Activated CD4-positive, alpha-beta T cell treated with anti-CD3 and anti-CD28 coated beads, Interleukin-2, amount 10 ng/mL, durations not matched to agents 7 days and 5 days (primary cell): ENCODE measurements at regions of chr19 and their contacts with region 1.

Region 1: DNA sequence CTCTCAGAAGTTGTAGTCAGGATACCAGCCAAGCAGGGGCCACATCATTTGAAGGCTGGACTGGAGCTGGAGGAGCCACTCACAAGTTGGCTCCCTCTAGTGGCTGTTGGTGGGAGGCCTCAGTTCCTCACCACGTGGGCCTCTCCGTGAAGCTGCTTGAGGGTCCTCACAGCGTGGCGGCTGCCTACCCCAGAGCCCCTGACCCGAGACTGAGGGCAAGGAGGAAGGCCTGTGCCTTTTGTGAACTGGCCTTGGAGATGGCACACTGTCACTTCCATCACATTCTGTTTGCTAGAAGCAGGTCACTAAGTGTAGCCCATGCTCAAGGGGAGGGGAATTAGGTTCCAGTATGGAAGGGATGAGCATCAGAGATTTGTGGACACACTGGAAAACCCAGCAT is 14.6 kb downstream of the GNA11 start:
- DNase-seq: peak; percentile 77
- H3K4me3 Mint-ChIP-seq: no peak overlapping the region
- H3K27ac Mint-ChIP-seq: no peak overlapping the region
- H3K4me1 Mint-ChIP-seq: peaks cover 9% of the 10 kb centered on the region
- H3K27me3 Mint-ChIP-seq: no peaks in the 10 kb centered on the region

Region 2: DNA sequence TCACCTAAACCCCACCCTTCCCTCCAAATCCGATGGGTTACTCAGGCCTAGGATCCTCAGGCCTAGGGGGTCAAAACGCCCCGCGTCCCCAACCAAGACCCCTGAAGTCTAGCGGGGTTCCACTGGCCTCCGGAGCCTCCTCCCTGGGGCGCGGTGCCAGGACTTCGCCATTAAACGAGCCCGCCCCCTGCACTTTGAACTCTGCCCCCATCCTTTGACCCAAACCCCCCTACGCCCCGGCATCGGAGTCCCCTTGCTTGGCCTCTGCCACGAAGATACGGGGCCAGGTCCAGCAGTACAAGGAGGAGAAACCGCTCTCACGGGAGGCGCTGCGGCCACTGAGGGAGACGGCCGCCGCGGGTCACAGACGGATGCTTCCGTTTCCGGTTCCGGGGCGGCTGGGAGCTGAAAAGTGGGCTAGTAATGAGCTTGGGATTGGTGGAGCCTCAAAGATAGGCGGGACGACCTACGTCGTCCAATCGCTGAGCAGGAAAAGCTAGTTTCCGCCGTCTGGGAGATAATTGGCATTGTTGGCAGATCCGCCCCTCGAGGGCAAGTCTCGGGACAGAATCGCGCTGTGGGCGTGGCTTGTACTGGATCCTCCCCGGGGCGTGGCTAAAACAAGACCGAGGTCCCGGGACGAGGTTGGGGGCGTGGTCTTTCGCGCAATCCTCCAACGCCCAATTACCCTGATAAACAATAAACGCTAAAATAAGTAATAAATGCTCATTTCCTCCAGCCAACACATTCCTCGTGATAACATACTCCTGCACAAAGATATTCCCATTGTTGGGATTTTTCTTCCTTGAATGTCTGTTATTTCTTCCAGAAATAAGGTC is 158.3 kb before region 1 on chr19:
- CTCF ChIA-PET with region 1: interaction called, 29 read pairs
- POLR2A ChIA-PET with region 1: no interaction called
- DNase-seq: peak; percentile 100
- H3K4me3 Mint-ChIP-seq: peak overlapping the region; percentile 94
- H3K27ac Mint-ChIP-seq: peak overlapping the region; percentile 97
- H3K4me1 Mint-ChIP-seq: peaks cover 27% of the 10 kb centered on the region
- H3K27me3 Mint-ChIP-seq: no peaks in the 10 kb centered on the region

Region 3: GRCh38 chr19:2962045-2962561 is 146.7 kb before region 1 on chr19:
- CTCF ChIA-PET with region 1: interaction called, 18 read pairs
- POLR2A ChIA-PET with region 1: no interaction called
- DNase-seq: peak; percentile 78
- H3K4me3 Mint-ChIP-seq: peak overlapping the region; percentile 56
- H3K27ac Mint-ChIP-seq: peak overlapping the region; percentile 78
- H3K4me1 Mint-ChIP-seq: peaks cover 5% of the 10 kb centered on the region
- H3K27me3 Mint-ChIP-seq: no peaks in the 10 kb centered on the region

Region 4: GRCh38 chr19:3080301-3081026 is 28.3 kb before region 1 on chr19:
- CTCF ChIA-PET with region 1: interaction called, 14 read pairs
- POLR2A ChIA-PET with region 1: no interaction called
- DNase-seq: no peak
- H3K4me3 Mint-ChIP-seq: no peak overlapping the region
- H3K27ac Mint-ChIP-seq: no peak overlapping the region
- H3K4me1 Mint-ChIP-seq: peaks cover 5% of the 10 kb centered on the region
- H3K27me3 Mint-ChIP-seq: no peaks in the 10 kb centered on the region

Region 5: GRCh38 chr19:3094601-3095437 is 14.0 kb before region 1 on chr19:
- CTCF ChIA-PET with region 1: interaction called, 11 read pairs
- POLR2A ChIA-PET with region 1: no interaction called
- DNase-seq: no peak
- H3K4me3 Mint-ChIP-seq: peak overlapping the region; percentile 52
- H3K27ac Mint-ChIP-seq: peak overlapping the region; percentile 41
- H3K4me1 Mint-ChIP-seq: peaks cover 20% of the 10 kb centered on the region
- H3K27me3 Mint-ChIP-seq: peaks cover 35% of the 10 kb centered on the region

Region 6: GRCh38 chr19:3125900-3126524 is 17.2 kb after region 1 on chr19:
- CTCF ChIA-PET with region 1: interaction called, 11 read pairs
- POLR2A ChIA-PET with region 1: no interaction called
- DNase-seq: peak; percentile 87
- H3K4me3 Mint-ChIP-seq: no peak overlapping the region
- H3K27ac Mint-ChIP-seq: no peak overlapping the region
- H3K4me1 Mint-ChIP-seq: peaks cover 18% of the 10 kb centered on the region
- H3K27me3 Mint-ChIP-seq: peaks cover 5% of the 10 kb centered on the region

Region 7: GRCh38 chr19:3151563-3152430 is 43.0 kb after region 1 on chr19:
- CTCF ChIA-PET with region 1: no interaction called
- POLR2A ChIA-PET with region 1: no interaction called
- DNase-seq: no peak
- H3K4me3 Mint-ChIP-seq: no peak overlapping the region
- H3K27ac Mint-ChIP-seq: no peak overlapping the region
- H3K4me1 Mint-ChIP-seq: peaks cover 2% of the 10 kb centered on the region
- H3K27me3 Mint-ChIP-seq: no peaks in the 10 kb centered on the region

Region 8: DNA sequence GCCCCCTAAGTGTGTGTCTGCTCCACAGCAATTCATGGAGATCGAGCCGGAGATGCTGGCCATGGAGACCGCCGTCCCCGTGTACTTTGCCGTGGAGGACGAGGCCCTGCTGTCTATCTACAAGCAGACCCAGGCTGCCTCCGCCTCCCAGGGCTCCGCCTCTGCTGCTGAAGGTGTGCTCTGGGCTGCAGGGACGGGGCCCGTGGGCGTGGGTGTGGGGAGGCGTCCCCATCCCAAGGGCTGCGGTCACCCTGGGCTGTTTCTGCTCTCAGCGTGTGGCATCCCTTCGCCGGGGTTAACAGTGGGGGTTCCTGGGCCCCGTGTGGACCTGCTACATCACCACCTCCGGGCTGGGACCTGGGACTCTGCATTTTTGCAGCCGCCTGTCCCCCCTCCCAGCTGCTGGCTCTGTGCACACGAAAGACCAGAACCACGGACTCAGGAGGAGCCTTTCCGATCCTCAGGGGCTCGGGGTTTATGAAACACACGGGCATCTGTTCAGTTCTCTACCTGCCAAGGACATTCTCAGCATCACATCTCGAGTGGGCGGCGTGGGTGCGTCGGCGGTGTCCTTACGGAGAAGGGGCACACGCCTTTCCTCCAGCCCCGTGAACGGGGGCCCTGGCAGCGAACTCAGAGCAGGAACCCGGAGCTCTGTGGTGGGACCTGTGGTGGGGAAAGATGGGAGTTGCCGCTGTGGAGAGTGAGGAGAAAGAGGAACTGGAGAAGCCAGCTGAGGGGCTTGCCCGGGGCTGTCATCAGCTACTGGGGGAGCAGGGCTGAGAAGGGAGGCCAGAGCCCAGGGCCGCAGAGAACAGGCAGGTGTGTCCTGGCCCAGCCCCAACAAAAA is 84.7 kb after region 1 on chr19:
- CTCF ChIA-PET with region 1: no interaction called
- POLR2A ChIA-PET with region 1: no interaction called
- DNase-seq: no peak
- H3K4me3 Mint-ChIP-seq: no peak overlapping the region
- H3K27ac Mint-ChIP-seq: no peak overlapping the region
- H3K4me1 Mint-ChIP-seq: peaks cover 11% of the 10 kb centered on the region
- H3K27me3 Mint-ChIP-seq: no peaks in the 10 kb centered on the region